Tibial artery (tissue), 4 donors: ENCODE measurements at regions of chr12 and their contacts with region 1.

Region 1: GRCh38 chr12:108950991-108951739 is 69.7 kb downstream of the SVOP start:
- DNase-seq: peak; percentile 69 to 76
- H3K4me3 ChIP-seq: no peak overlapping the region
- H3K27ac ChIP-seq: no peak overlapping the region
- H3K4me1 ChIP-seq: peaks cover 0 to 7% (median 0%) of the 10 kb centered on the region in 4 donors
- H3K27me3 ChIP-seq: peaks cover 0 to 6% of the 10 kb centered on the region in 2 donors
- CTCF ChIP-seq: peak; percentile 87 to 89

Region 2: GRCh38 chr12:108618079-108618952 is 332.8 kb before region 1 on chr12:
- intact Hi-C with region 1: loop called (anchors 10 kb)
- DNase-seq: peak; percentile 75 to 82
- H3K4me3 ChIP-seq: no peak overlapping the region
- H3K27ac ChIP-seq: no peak overlapping the region
- H3K4me1 ChIP-seq: peaks cover 0 to 7% (median 3%) of the 10 kb centered on the region in 4 donors
- H3K27me3 ChIP-seq: no peaks in the 10 kb centered on the region
- CTCF ChIP-seq: peak; percentile 90 to 96

Region 3: DNA sequence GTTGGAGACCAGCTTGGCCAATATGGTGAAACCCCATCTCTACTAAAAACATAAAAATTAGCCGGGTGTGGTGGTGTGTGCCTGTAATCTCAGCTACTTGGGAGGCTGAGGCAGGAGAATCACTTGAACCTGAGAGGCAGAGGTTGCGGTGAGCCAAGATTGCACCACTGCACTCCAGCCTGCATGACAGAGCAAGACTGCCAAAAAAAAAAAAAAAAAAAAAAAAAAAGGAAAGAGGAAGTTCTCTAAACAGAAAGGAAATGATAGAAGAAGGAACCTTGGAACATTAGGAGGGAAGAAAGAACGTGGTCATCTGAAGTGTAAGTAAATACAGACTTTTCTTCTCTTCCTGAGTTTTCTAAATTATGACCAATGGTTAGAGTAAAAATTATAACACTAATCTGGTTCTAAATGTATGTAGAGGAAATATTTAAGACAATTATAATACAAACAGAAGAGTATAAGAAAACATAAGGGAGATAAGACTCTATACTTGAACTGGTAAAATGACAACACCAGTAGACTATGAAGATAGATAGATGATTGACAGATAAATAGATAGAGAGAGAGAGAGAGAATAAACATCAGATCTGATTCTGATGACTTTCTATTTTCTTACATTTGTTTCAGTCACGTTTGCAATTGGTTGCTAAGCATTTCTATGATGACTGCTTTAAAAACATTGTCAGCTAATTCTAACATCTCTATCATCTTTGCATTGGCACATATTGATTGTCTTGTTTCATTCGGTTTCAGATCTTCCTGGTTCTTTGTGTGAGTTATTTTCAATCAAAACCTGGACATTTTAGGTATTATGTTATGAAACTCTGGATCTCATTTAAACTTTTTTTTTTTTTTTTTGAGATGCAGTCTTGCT is 206.9 kb before region 1 on chr12:
- intact Hi-C with region 1: loop called (anchors 10 kb)
- DNase-seq: no peak
- H3K4me3 ChIP-seq: no peak overlapping the region
- H3K27ac ChIP-seq: no peak overlapping the region
- H3K4me1 ChIP-seq: no peaks in the 10 kb centered on the region
- H3K27me3 ChIP-seq: no peaks in the 10 kb centered on the region
- CTCF ChIP-seq: no peak

Region 4: DNA sequence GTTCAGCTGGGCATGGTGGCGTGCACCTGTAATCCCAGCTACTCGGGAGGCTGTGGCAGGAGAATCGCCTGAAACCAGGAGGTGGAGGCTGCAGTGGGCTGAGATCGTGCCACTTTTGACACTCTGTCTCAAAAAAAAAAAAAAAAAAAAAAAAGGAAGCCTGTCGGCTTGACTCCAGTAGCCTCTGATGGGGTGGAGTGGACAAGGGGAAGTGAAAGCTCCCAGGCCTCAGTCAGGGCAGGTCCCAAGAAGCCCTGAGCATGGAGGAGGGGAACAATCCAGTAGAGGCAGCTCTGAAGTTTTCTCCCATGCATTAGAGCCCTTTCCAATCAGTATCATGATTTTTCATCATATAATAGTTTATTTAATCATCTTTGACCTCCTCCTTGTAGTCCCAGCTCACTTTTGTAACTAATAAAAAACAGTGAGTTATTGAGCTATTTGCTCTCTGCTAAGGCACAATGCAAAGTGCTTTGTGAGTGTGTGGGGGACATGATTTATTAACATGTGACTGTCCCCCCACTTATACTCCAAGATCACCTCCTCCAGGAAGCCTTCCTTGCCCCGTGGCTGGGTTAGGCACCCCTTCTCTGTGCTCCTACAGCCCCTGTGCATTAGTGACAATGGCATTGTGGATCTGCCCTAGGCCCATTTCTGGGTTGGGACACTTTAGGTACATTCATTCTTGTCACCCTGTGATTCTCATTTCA is 89.1 kb before region 1 on chr12:
- intact Hi-C with region 1: loop called (anchors 10 kb)
- DNase-seq: peak in 1 of 2 donors; percentile 52
- H3K4me3 ChIP-seq: no peak overlapping the region
- H3K27ac ChIP-seq: no peak overlapping the region
- H3K4me1 ChIP-seq: peaks cover 0 to 18% (median 12%) of the 10 kb centered on the region in 4 donors
- H3K27me3 ChIP-seq: no peaks in the 10 kb centered on the region
- CTCF ChIP-seq: no peak